Heart right ventricle (tissue), 16 donors: ENCODE measurements at regions of chr18 and their contacts with region 1.

Region 1: GRCh38 chr18:48693625-48694262 is 154.9 kb downstream of the CTIF start:
- DNase-seq: no peak
- ATAC-seq: no peak
- H3K4me3 ChIP-seq: no peak overlapping the region
- H3K27ac ChIP-seq: peak overlapping the region in 3 of 10 donors; percentile 2 to 47 (median 21)
- H3K4me1 ChIP-seq: peaks cover 0 to 74% (median 33%) of the 10 kb centered on the region in 9 donors
- H3K27me3 ChIP-seq: no peaks in the 10 kb centered on the region
- CTCF ChIP-seq: no peak

Region 2: DNA sequence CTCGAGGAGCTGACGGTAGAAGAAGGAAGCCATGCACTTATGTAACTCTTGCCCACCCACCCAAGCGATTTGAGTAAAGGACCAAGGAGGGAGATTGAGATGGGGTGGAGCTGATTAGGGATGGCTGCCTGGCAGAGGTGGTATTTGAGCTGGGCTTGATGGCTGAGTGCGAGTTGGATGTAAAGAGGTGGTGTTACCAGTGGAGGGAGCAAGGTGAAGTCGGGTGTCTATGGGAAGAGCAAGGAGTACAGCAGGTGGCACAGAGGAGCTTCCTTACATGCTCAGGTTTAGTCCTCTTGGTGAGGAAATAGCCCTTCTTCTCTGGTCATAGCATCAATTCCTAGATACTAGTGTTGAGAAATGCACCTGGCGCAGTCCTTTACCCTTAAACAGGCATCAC is 1148.1 kb before region 1 on chr18:
- intact Hi-C with region 1: no loop called
- DNase-seq: no peak
- ATAC-seq: no peak
- H3K4me3 ChIP-seq: no peak overlapping the region
- H3K27ac ChIP-seq: no peak overlapping the region
- H3K4me1 ChIP-seq: peaks cover 0 to 5% (median 0%) of the 10 kb centered on the region in 9 donors
- H3K27me3 ChIP-seq: peaks cover 0 to 71% (median 51%) of the 10 kb centered on the region in 7 donors
- CTCF ChIP-seq: no peak

Region 3: GRCh38 chr18:48385596-48385995 is 308.1 kb before region 1 on chr18:
- intact Hi-C with region 1: no loop called
- DNase-seq: no peak
- ATAC-seq: no peak
- H3K4me3 ChIP-seq: no peak overlapping the region
- H3K27ac ChIP-seq: no peak overlapping the region
- H3K4me1 ChIP-seq: no peaks in the 10 kb centered on the region
- H3K27me3 ChIP-seq: peaks cover 0 to 6% (median 0%) of the 10 kb centered on the region in 7 donors
- CTCF ChIP-seq: no peak

Region 4: GRCh38 chr18:49447810-49448745 is 754.3 kb after region 1 on chr18:
- intact Hi-C with region 1: loop called in 1 of 10 experiments (anchors 10 kb)
- DNase-seq: peak in 1 of 2 donors; percentile 28
- ATAC-seq: peak in 6 of 8 donors; percentile 73 to 84 (median 76)
- H3K4me3 ChIP-seq: no peak overlapping the region
- H3K27ac ChIP-seq: no peak overlapping the region
- H3K4me1 ChIP-seq: peaks cover 0 to 4% (median 0%) of the 10 kb centered on the region in 9 donors
- H3K27me3 ChIP-seq: no peaks in the 10 kb centered on the region
- CTCF ChIP-seq: peak; percentile 25 to 67 (median 51)